T-cell (primary cell): ENCODE measurements at regions of chr5 and their contacts with region 1.

Region 1: GRCh38 chr5:176447982-176448608 is at the start of gene FAF2:
- DNase-seq: peak; percentile 89 to 100 (median 95)
- ATAC-seq: peak; percentile 95 to 97 (median 96)
- H3K4me3 ChIP-seq: peak within 1 kb of the TSS; percentile 85 to 95
- H3K4me3 Mint-ChIP-seq: peak within 1 kb of the TSS; percentile 95 to 96 (median 96)
- H3K27ac ChIP-seq: peak within 1 kb of the TSS; percentile 94
- H3K27ac Mint-ChIP-seq: peak within 1 kb of the TSS; percentile 95 to 98
- H3K4me1 ChIP-seq: peaks cover 11 to 23% of the 10 kb centered on the region in 2 experiments
- H3K4me1 Mint-ChIP-seq: peaks cover 40 to 50% (median 41%) of the 10 kb centered on the region in 3 donors
- H3K27me3 ChIP-seq: no peaks in the 10 kb centered on the region
- H3K27me3 Mint-ChIP-seq: no peaks in the 10 kb centered on the region
- total RNA-seq, gene FAF2: 24.1 to 27.7 (median 26.2) TPM

Region 2: GRCh38 chr5:176415952-176416924 is 31.9 kb before region 1 on chr5 and contains the start of gene CLTB:
- CTCF ChIA-PET with region 1: interaction called, 6 to 12 read pairs
- POLR2A ChIA-PET with region 1: no interaction called
- DNase-seq: peak; percentile 75 to 97 (median 88)
- ATAC-seq: peak; percentile 92 to 97 (median 94)
- H3K4me3 ChIP-seq: peak within 1 kb of the TSS; percentile 68 to 84
- H3K4me3 Mint-ChIP-seq: peak within 1 kb of the TSS; percentile 76 to 82 (median 77)
- H3K27ac ChIP-seq: peak within 1 kb of the TSS; percentile 55
- H3K27ac Mint-ChIP-seq: peak within 1 kb of the TSS; percentile 74 to 77
- H3K4me1 ChIP-seq: peaks cover 11 to 39% of the 10 kb centered on the region in 2 experiments
- H3K4me1 Mint-ChIP-seq: peaks cover 39 to 47% (median 42%) of the 10 kb centered on the region in 3 donors
- H3K27me3 ChIP-seq: no peaks in the 10 kb centered on the region
- H3K27me3 Mint-ChIP-seq: no peaks in the 10 kb centered on the region
- total RNA-seq, gene CLTB: 43.9 to 73.5 (median 45.6) TPM

Region 3: DNA sequence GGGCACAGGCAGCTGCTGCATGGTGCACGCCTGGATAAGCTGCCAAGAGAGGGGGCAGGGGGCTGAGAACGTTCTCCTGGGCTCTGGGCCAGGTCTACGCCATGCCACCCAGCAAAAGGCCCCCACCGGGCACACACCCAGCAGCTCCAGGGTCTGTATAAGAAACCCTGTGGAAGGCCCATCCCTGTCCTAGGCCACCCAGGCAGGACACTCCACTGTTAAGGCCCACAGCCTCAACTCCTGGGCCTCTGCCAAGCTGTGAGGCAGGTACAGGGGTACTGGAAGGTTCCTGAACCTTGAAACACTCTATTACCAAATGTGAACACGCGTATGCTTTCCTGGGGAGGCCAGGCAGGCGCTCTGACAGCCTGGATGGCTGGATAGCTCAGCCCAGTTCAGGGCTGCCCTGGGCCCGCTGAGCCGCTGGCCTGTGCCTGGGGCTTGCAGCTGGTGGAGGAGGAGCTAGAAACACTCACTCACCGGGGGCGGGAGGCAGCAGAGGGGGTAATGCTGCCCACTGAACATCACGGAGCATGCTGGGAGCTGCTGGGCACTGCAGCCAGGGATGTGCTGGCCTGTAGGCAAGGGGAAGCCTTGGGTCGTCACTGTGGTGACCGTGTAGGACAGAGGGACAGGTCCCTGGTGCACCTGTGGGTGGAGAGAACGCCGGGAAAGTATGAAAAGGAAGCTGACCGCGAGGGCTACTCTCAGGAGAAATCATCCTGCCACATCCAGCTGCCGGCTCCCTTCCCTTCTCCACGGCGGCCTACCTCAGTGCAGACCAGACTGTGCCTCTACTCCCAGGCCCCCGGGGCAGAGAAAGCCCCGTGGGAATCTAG is 83.1 kb after region 1 on chr5:
- CTCF ChIA-PET with region 1: interaction called in 1 of 2 experiments, 10 read pairs
- POLR2A ChIA-PET with region 1: interaction called in 1 of 2 experiments, 3 read pairs
- DNase-seq: no peak
- ATAC-seq: no peak
- H3K4me3 ChIP-seq: peak overlapping the region; percentile 36 to 58
- H3K4me3 Mint-ChIP-seq: peak overlapping the region; percentile 64 to 97 (median 71)
- H3K27ac ChIP-seq: peak overlapping the region; percentile 47
- H3K27ac Mint-ChIP-seq: peak overlapping the region; percentile 95 to 96
- H3K4me1 ChIP-seq: peaks cover 48 to 89% of the 10 kb centered on the region in 2 experiments
- H3K4me1 Mint-ChIP-seq: peaks cover 58 to 61% (median 59%) of the 10 kb centered on the region in 3 donors
- H3K27me3 ChIP-seq: no peaks in the 10 kb centered on the region
- H3K27me3 Mint-ChIP-seq: no peaks in the 10 kb centered on the region

Region 4: GRCh38 chr5:176537608-176538504 is 89.8 kb after region 1 on chr5:
- CTCF ChIA-PET with region 1: interaction called in 1 of 2 experiments, 19 read pairs
- POLR2A ChIA-PET with region 1: interaction called in 1 of 2 experiments, 3 read pairs
- DNase-seq: peak; percentile 87 to 99 (median 98)
- ATAC-seq: peak; percentile 68 to 78 (median 70)
- H3K4me3 ChIP-seq: peak overlapping the region; percentile 78 to 98
- H3K4me3 Mint-ChIP-seq: peak overlapping the region; percentile 97 to 99 (median 98)
- H3K27ac ChIP-seq: peak overlapping the region; percentile 99
- H3K27ac Mint-ChIP-seq: peak overlapping the region; percentile 99 to 100
- H3K4me1 ChIP-seq: peaks cover 42 to 76% of the 10 kb centered on the region in 2 experiments
- H3K4me1 Mint-ChIP-seq: peaks cover 71 to 82% (median 71%) of the 10 kb centered on the region in 3 donors
- H3K27me3 ChIP-seq: no peaks in the 10 kb centered on the region
- H3K27me3 Mint-ChIP-seq: no peaks in the 10 kb centered on the region